Activated B cell treated with CpG ODN at 0.5 μM for 24 hours (primary cell): ENCODE measurements at regions of chr6 and their contacts with region 1.

Region 1: DNA sequence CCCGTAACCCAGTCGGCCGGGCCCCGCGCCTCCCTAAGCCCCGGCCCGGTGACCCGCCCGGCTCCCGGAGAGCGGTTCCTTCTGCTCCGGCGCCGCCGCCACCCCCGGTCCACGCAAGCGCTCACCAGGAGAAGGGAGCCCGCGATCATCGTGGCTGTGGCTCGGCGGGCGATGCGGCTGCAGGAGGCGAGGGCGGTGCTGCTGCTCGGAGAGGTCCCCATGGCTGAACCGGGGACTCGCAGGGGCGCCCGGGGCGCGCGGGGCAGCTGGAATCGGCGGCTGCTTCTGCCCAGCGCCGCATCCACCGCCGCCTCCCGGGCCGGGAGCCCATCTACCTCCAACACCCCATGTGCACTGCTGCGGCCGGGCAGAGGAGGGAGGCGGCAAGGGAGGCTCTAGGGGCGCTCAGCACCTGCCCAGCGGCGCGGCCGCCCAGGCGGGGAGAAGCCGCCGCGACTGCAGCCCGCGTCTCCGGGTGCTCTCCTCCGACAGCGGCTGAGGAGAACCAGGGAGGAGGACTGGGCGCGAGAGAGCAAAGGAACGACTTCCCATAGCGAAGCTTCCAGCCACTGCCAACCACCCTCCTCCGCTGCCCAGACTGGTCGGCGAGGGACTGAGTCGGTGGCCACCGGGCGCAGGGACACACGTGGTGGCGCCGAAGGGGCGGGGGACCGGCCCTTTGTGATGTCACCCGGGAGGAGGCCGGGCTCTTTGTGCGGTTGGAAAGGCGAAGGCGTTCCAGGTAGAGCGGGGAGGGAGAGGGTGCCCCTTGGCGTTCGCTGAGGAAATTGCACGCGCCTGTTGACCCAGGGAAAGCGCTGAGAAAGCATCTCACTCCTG is at the start of gene TNFRSF21:
- DNase-seq: peak; percentile 67
- ATAC-seq: peak; percentile 96
- H3K4me3 Mint-ChIP-seq: peak within 1 kb of the TSS; percentile 83
- H3K27ac Mint-ChIP-seq: no peak within 1 kb of the TSS
- H3K4me1 Mint-ChIP-seq: peaks cover 12% of the 10 kb centered on the region
- H3K27me3 Mint-ChIP-seq: peaks cover 33% of the 10 kb centered on the region
- CTCF ChIP-seq: no peak
- total RNA-seq, gene TNFRSF21: 1.0 and 1.1 TPM in 2 replicates

Region 2: GRCh38 chr6:46419576-46420002 is 889.9 kb before region 1 on chr6:
- CTCF ChIA-PET with region 1: no interaction called
- POLR2A ChIA-PET with region 1: no interaction called
- intact Hi-C with region 1: loop called (anchors 2 kb)
- DNase-seq: no peak
- ATAC-seq: no peak
- H3K4me3 Mint-ChIP-seq: no peak overlapping the region
- H3K27ac Mint-ChIP-seq: no peak overlapping the region
- H3K4me1 Mint-ChIP-seq: no peaks in the 10 kb centered on the region
- H3K27me3 Mint-ChIP-seq: peaks cover 10% of the 10 kb centered on the region
- CTCF ChIP-seq: no peak

Region 3: GRCh38 chr6:46848684-46849360 is 460.7 kb before region 1 on chr6:
- CTCF ChIA-PET with region 1: no interaction called
- POLR2A ChIA-PET with region 1: no interaction called
- intact Hi-C with region 1: loop called (anchors 1 kb)
- DNase-seq: peak; percentile 46
- ATAC-seq: peak; percentile 57
- H3K4me3 Mint-ChIP-seq: peak overlapping the region; percentile 52
- H3K27ac Mint-ChIP-seq: no peak overlapping the region
- H3K4me1 Mint-ChIP-seq: peaks cover 5% of the 10 kb centered on the region
- H3K27me3 Mint-ChIP-seq: peaks cover 25% of the 10 kb centered on the region
- CTCF ChIP-seq: peak; percentile 35

Region 4: DNA sequence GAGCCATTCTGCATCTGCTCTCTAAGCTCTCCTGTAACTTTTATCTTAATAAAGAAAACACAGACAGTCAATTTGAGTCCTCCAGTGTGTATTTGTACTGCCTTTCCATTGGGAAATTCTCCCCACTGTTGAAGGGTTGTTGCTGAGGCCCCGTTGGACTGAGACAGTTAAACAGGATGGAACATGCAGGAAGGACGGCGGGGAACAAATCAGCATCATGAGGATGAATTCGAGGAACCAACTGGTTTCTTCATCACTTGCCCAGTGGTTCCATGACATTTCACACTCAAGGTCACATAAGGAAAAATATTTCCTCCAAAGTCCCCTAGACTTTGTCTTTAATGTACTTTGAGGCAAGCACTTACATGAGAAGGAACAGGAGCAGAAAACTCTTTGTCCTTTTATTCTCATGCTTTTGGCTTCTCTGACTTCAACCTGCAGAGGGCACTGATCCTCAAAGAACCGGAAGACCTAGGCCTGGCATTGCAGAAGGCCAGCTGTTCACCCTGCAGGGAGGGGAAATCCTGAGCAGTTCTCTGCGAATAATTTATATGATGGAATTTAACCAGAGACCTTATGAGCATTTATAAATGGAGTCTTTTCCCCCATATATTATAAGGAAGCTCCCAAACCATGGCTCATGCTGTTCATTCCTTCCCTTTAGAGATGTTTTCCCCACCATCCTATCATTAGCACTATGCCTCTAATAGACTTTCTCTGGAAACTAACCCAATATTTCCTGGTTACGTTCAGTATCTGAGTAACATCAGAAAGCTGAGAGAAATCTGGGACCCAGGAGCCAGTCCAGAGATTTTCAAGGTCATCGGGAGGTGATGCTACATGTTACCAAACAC is 212.2 kb before region 1 on chr6:
- CTCF ChIA-PET with region 1: interaction called, 31 read pairs
- POLR2A ChIA-PET with region 1: no interaction called
- intact Hi-C with region 1: loop called (anchors 1 kb)
- DNase-seq: no peak
- ATAC-seq: peak; percentile 67
- H3K4me3 Mint-ChIP-seq: no peak overlapping the region
- H3K27ac Mint-ChIP-seq: no peak overlapping the region
- H3K4me1 Mint-ChIP-seq: no peaks in the 10 kb centered on the region
- H3K27me3 Mint-ChIP-seq: no peaks in the 10 kb centered on the region
- CTCF ChIP-seq: no peak

Region 5: GRCh38 chr6:47116616-47117015 is 192.9 kb before region 1 on chr6:
- CTCF ChIA-PET with region 1: no interaction called
- POLR2A ChIA-PET with region 1: no interaction called
- intact Hi-C with region 1: no loop called
- DNase-seq: no peak
- ATAC-seq: no peak
- H3K4me3 Mint-ChIP-seq: no peak overlapping the region
- H3K27ac Mint-ChIP-seq: no peak overlapping the region
- H3K4me1 Mint-ChIP-seq: no peaks in the 10 kb centered on the region
- H3K27me3 Mint-ChIP-seq: peaks cover 2% of the 10 kb centered on the region
- CTCF ChIP-seq: no peak

Region 6: GRCh38 chr6:47242483-47243386 is 66.8 kb before region 1 on chr6:
- CTCF ChIA-PET with region 1: no interaction called
- POLR2A ChIA-PET with region 1: no interaction called
- intact Hi-C with region 1: loop called (anchors 1 kb)
- DNase-seq: peak; percentile 65
- ATAC-seq: peak; percentile 99
- H3K4me3 Mint-ChIP-seq: peak overlapping the region; percentile 59
- H3K27ac Mint-ChIP-seq: peak overlapping the region; percentile 83
- H3K4me1 Mint-ChIP-seq: peaks cover 36% of the 10 kb centered on the region
- H3K27me3 Mint-ChIP-seq: no peaks in the 10 kb centered on the region
- CTCF ChIP-seq: no peak

Region 7: DNA sequence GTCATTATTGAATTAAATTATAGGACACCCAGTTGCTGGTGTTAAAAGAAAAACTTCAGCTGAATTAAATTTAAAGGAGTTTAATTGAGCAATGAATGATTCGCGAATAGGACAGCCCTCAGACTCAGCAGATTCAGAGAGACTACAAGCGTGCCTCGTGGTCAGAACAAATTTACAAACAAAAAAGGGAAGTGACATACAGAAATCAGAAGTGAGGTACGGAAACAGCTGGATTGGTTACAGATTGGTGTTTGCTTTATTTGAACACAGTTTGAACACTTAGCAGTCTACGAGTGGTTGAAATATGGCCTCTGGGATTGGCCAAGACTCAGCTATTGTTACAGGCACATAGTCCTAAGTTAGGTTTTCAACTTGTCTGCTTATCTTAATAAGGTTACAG is 26.0 kb after region 1 on chr6:
- CTCF ChIA-PET with region 1: no interaction called
- POLR2A ChIA-PET with region 1: no interaction called
- intact Hi-C with region 1: no loop called
- DNase-seq: no peak
- ATAC-seq: peak; percentile 73
- H3K4me3 Mint-ChIP-seq: peak overlapping the region; percentile 0
- H3K27ac Mint-ChIP-seq: peak overlapping the region; percentile 21
- H3K4me1 Mint-ChIP-seq: peaks cover 19% of the 10 kb centered on the region
- H3K27me3 Mint-ChIP-seq: no peaks in the 10 kb centered on the region
- CTCF ChIP-seq: no peak